SK-N-SH (cell line): ENCODE measurements at regions of chr12 and their contacts with region 1.

Region 1: DNA sequence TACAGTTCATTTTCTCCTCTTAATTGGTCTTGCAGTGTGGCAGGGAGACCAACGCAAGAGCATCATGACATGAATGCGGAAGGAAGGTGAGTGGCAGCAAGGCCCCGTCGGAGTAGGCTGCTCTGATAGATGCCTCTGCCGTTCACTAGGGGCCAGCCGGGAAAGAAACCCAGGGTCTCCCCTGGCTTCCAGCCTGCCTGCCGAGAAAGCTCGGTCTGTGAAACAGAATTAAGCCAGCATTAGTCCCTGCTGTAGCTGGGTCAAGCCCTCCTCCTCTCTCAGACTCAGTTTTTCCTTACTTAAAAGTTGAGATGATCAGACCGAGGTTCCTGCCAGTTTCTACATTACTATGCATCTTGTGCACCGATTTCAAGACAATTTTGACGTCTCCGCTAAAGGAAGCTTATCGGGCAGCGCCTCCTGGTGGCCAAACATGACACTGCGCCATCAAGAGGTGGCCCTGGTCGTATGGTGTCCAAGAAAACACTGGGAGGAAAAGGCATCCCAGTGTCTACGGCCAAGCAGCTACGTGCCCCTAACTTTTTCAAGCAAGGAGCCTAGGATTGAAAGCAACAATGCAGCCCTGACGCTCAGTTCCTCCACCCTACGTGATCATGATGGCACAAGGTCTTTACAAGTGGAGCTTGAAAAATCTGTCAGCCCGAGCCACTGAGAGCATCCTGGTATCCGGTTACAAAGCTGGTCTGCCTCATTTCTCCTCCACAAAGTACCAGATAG is 131.6 kb downstream of the KSR2 start:
- DNase-seq: peak; percentile 67
- H3K4me3 ChIP-seq: peak overlapping the region in 1 of 2 experiments; percentile 28; a peak in 1 of 4 replicates
- H3K27ac ChIP-seq: no peak overlapping the region; a peak in 1 of 4 replicates
- H3K4me1 ChIP-seq: peaks cover 0 to 29% of the 10 kb centered on the region in 2 experiments; a peak in 1 of 4 replicates
- H3K27me3 ChIP-seq: no peaks in the 10 kb centered on the region; the same call in 1 of the 2 replicates
- CTCF ChIP-seq: peak; percentile 99
- EP300 ChIP-seq: no peak
- RAD21 ChIP-seq: peak; percentile 99

Region 2: GRCh38 chr12:117360551-117361346 is 476.4 kb before region 1 on chr12:
- CTCF ChIA-PET with region 1: interaction called, 22 read pairs
- POLR2A ChIA-PET with region 1: interaction called, 3 read pairs
- DNase-seq: peak; percentile 71
- H3K4me3 ChIP-seq: peak overlapping the region in 1 of 2 experiments; percentile 47; a peak in 3 of 4 replicates
- H3K27ac ChIP-seq: peak overlapping the region in 1 of 2 experiments; percentile 58; a peak in 1 of 4 replicates
- H3K4me1 ChIP-seq: peaks cover 0 to 53% of the 10 kb centered on the region in 2 experiments; a peak in 2 of 4 replicates
- H3K27me3 ChIP-seq: peaks cover 25% of the 10 kb centered on the region
- CTCF ChIP-seq: no peak
- EP300 ChIP-seq: no peak
- RAD21 ChIP-seq: no peak

Region 3: GRCh38 chr12:117441751-117442150 is 395.4 kb before region 1 on chr12:
- CTCF ChIA-PET with region 1: interaction called, 11 read pairs
- POLR2A ChIA-PET with region 1: no interaction called
- DNase-seq: no peak
- H3K4me3 ChIP-seq: no peak overlapping the region
- H3K27ac ChIP-seq: no peak overlapping the region; a peak in 1 of 4 replicates
- H3K4me1 ChIP-seq: peaks cover 0 to 40% of the 10 kb centered on the region in 2 experiments; a peak in 1 of 4 replicates
- H3K27me3 ChIP-seq: no peaks in the 10 kb centered on the region
- CTCF ChIP-seq: no peak
- EP300 ChIP-seq: no peak
- RAD21 ChIP-seq: no peak

Region 4: GRCh38 chr12:117481470-117481869 is 355.7 kb before region 1 on chr12:
- CTCF ChIA-PET with region 1: no interaction called
- POLR2A ChIA-PET with region 1: no interaction called
- DNase-seq: no peak
- H3K4me3 ChIP-seq: no peak overlapping the region
- H3K27ac ChIP-seq: no peak overlapping the region
- H3K4me1 ChIP-seq: peaks cover 0 to 3% of the 10 kb centered on the region in 2 experiments; a peak in 1 of 4 replicates
- H3K27me3 ChIP-seq: no peaks in the 10 kb centered on the region
- CTCF ChIP-seq: no peak
- EP300 ChIP-seq: no peak
- RAD21 ChIP-seq: no peak

Region 5: DNA sequence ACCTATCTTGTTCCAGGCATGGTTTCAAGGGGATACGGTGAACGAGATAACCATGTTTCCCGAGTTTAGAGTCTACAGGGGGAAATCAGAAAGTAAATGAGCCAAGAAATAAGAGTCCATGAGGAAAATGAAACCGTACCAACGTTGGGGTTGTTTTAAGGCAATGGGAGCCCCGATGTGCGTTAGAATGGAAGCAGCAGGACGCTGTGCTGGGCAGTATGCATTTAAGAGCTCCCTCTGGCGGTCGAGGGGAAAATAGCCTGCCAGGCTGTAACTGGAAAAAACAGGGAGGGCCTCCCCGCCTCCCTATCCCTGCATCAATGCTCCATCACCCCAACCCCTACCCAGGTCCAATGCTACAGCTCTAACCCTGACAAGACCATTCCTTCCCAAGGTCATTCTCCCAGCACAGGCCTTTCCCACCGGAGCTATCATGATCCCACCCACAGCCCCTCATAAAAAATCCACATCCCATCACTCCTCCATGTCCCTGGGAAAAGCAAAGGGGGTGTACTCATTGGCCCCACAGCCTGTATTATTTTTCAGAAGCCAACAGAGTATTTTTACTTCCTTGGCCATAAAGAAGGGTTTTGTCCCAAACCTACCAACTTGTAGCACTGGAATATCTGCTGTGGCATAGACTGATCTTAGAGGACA is 249.4 kb before region 1 on chr12:
- CTCF ChIA-PET with region 1: interaction called, 23 read pairs
- POLR2A ChIA-PET with region 1: no interaction called
- DNase-seq: peak; percentile 61
- H3K4me3 ChIP-seq: no peak overlapping the region
- H3K27ac ChIP-seq: no peak overlapping the region; a peak in 1 of 4 replicates
- H3K4me1 ChIP-seq: peaks cover 0 to 7% of the 10 kb centered on the region in 2 experiments; a peak in 1 of 4 replicates
- H3K27me3 ChIP-seq: no peaks in the 10 kb centered on the region
- CTCF ChIP-seq: peak; percentile 70
- EP300 ChIP-seq: no peak
- RAD21 ChIP-seq: peak; percentile 75

Region 6: DNA sequence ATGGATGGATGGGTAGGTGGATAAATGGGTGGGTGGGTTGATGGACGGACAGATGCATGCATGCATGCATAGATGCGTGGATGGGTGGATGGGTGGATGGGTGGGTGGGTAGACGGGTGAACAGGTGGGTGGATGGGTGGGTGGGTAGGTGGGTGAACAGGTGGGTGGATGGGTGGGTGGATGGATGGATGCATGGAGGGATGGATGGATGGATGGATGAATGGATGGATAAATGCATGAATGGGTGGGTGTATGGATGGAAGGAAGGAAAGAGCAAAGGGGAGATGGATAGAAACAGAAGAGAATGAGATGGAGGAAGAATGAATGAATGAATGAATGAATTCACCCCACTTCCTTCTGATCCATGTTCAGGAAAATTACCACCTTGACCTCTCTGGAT is 11.3 kb before region 1 on chr12:
- CTCF ChIA-PET with region 1: interaction called, 15 read pairs
- POLR2A ChIA-PET with region 1: interaction called, 3 read pairs
- DNase-seq: no peak
- H3K4me3 ChIP-seq: no peak overlapping the region
- H3K27ac ChIP-seq: no peak overlapping the region
- H3K4me1 ChIP-seq: no peaks in the 10 kb centered on the region; a peak in 1 of 4 replicates
- H3K27me3 ChIP-seq: no peaks in the 10 kb centered on the region
- CTCF ChIP-seq: no peak
- EP300 ChIP-seq: no peak
- RAD21 ChIP-seq: no peak

Region 7: GRCh38 chr12:118035246-118036041 is 198.3 kb after region 1 on chr12:
- CTCF ChIA-PET with region 1: no interaction called
- POLR2A ChIA-PET with region 1: no interaction called
- DNase-seq: peak; percentile 27
- H3K4me3 ChIP-seq: no peak overlapping the region
- H3K27ac ChIP-seq: peak overlapping the region in 1 of 2 experiments; percentile 20; a peak in 1 of 4 replicates
- H3K4me1 ChIP-seq: peaks cover 11 to 12% of the 10 kb centered on the region in 2 experiments; a peak in 2 of 4 replicates
- H3K27me3 ChIP-seq: no peaks in the 10 kb centered on the region
- CTCF ChIP-seq: no peak
- EP300 ChIP-seq: no peak
- RAD21 ChIP-seq: no peak